Posterior cingulate gyrus (tissue), 11 donors: ENCODE measurements at regions of chr12 and their contacts with region 1.

Region 1: DNA sequence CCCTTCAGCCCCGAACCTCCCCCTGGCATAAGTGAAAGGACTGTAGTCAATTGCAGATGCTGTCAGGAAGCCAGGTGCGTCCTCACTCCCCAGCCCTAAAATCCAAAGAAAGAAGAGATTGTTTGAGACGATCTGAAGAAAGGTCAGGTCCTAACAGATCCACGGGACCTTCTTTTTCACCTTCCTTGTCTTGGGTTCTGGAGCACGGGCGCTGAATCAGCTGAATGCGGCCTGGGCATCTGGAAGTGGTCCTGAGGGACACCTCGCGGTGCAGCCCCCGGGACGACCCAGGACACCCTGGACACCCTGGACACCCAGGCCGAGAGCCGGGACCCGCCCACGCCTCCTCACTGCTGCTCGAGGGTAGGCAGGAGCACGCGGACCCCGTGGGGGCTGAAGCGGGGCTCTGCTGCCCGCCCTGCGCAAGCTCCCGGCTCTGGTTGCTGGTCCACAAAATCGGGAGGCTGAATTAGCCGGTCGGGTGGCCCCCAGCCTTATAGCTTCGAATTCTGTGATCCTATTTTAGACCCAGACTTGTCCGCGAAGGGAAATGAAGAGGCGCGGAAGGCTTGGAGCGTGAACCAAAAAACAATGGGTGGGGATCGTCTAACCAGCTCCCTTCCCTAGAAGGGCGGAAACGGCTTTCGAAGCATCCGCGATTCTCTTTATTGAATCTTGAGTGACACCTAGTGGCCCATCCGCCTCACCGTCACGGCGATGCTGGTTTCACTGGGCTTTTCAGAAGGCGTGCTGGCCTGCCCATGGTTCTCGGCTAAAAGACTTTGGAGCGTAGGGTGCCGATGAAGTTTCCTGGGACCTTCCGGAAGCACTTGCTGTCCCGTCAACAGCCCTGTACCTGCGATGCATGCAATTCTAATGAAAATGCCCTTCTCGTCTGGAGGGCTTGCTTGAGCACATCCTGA is 46.4 kb upstream of the PLXNC1 start:
- DNase-seq: peak; percentile 71 to 97 (median 84)

Region 2: DNA sequence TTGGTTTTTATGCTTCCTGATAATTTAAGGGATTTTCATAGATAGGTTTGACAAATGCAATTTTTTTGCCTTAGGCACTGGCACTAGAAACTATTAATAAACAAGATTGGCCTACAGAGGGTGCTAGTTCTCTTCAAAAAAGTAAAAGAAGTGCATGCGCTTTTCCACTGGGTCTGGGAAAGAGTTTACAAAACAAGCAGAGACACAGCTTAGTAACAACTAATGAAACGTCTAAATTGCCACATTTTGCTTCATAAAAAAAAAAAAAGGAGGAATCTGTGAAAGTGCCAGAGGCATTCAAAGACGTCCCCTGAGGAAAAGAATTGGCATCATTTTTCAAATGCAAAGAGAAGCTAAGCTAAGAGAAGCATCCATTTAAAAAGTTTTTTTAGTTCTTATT is 1114.6 kb before region 1 on chr12:
- intact Hi-C with region 1: loop called (anchors 10 kb)
- DNase-seq: no peak

Region 3: GRCh38 chr12:93502802-93503623 is 599.0 kb before region 1 on chr12:
- intact Hi-C with region 1: loop called (anchors 2 kb)
- DNase-seq: peak in 5 of 10 donors; percentile 20 to 52 (median 40)

Region 4: DNA sequence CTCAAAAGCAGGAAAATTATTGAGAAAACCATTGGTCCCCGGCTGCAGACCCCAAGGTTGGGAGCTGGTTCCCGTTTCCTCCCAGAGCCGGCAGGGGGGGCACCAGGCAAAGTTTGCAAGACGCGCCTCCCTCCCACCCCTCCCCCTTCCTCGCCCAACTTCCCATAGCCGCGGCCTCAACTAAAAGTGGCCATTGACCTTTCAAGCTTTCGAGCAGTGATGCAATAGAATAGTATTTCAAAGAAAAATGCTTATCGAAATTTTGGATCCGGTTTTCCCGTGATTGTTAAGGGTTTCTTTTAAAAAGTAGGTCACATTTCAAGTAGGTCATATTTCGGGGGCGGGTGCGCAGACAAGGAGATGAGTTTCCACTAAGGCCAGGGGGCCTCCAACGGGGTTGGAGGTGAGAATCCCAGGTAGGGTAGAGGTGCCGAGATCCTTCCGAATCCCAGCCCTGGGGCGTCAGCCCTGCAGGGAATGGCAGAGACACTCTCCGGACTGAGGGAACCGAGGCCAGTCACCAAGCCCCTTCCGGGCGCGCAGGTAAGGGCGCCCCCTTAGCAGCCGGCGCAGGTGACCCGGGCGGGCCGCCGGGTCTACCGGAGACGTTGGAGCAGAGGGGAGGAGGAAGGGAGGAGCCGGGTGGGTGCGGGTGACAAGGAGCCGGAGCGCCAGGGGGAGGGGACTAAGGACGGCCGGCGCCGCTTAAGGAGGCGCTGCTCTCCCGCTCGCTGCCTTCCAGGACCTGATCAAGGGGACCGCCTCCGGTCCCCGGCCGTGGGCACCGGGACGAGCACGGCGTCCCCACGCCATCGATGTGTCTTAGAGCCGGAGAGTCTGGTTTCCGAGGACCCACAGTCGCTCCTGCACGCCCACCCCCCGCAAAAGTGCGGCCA is 532.1 kb before region 1 on chr12:
- intact Hi-C with region 1: loop called (anchors 1 kb)
- DNase-seq: peak; percentile 68 to 95 (median 78)

Region 5: DNA sequence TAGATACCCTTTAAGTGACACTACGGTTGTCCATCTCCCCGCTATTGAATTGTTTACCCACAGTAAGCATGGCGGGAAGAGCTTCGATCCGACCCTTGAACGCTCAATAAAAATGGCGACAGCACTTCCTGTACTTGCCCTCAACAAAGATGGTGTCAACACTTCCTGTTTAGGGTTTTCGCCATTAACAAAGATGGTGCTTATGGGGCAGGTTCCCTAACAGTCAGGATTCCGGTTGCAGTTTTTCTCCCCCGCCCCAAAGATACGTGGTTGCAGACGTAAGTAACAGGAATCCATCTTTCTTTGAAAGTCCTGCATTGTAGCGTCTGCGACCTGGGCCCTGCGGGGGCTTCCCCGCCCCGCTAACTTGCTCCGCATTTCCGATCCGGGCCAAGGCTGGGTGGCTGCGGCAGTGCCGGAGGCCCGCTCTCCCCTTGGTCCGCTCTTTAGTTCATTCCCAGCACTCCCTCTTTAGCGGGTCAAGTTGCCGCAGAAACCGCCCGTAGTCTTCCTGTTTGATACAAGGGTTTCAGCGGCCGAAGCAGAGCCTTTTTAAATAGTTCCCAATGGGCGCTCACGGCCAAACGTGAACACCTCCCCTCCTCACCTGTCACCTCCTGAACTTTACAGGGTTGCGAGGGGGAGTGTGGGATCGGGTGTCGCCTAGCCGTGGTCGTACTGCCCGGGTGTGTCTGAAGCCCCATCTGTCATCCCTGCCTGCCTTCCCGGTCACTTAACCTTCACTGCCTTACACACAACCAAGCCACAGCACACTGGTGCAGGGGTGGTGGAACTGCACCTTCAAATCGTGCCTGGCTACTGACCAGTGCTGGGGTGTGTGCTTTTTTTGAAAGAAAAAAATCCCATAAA is 424.6 kb before region 1 on chr12 and contains the start of gene CRADD:
- intact Hi-C with region 1: loop called (anchors 5 kb)
- DNase-seq: peak; percentile 54 to 95 (median 70)

Region 6: DNA sequence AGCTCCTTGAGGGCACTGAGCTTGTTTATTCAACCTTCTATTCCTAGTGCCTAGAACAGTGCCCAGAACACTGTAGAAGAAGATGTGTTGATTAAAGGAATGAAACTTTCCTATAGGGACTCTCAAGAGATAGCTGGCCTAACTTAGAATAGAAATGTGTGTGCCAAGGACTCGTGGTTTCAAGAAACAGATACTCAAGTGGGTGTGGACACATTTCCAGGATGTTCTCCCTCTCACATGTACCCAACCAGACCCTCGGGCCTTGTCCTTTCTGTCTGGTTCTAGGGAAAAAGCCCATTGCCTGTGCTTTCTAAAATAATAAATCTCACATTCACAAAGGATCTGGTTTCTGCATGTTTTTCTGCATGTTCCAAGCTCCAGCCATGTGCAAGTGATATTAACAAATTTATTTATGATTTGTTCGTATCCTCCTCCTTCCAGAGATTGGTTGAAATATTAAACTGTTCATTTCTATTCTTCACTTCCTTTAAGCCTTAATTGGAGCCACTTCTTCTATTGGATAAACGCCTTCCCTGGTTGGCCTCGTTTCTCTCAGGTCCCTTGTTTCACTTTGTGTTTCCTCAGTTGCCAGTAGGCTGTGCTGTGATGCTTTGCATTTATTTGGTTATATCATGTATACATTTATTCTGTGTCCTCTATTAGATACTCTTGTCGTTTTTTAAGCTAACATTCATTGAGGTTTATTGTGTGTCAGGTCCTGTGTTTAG is 335.0 kb before region 1 on chr12:
- intact Hi-C with region 1: loop called (anchors 1 kb)
- DNase-seq: peak in 3 of 10 donors; percentile 20 to 40 (median 30)

Region 7: DNA sequence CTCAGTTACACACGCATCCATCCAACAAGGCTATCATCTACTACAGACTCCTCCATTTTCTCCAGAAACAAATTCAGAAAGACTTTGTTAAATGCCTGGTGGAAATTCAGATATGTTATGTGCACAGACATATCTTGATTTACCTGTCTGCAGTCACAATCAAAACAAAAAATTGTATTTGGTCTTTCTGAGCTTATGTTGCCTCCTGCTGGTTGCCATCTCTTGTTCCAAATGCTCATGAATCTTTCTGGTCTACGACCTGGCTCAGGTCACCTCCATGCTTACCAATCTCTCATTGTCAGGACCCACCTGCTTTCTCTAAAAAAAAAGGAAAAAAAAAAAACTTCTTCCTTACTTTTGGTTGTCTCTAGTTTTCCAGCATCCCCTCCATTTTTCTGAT is 122.8 kb before region 1 on chr12:
- intact Hi-C with region 1: loop called (anchors 10 kb)
- DNase-seq: no peak

Region 8: DNA sequence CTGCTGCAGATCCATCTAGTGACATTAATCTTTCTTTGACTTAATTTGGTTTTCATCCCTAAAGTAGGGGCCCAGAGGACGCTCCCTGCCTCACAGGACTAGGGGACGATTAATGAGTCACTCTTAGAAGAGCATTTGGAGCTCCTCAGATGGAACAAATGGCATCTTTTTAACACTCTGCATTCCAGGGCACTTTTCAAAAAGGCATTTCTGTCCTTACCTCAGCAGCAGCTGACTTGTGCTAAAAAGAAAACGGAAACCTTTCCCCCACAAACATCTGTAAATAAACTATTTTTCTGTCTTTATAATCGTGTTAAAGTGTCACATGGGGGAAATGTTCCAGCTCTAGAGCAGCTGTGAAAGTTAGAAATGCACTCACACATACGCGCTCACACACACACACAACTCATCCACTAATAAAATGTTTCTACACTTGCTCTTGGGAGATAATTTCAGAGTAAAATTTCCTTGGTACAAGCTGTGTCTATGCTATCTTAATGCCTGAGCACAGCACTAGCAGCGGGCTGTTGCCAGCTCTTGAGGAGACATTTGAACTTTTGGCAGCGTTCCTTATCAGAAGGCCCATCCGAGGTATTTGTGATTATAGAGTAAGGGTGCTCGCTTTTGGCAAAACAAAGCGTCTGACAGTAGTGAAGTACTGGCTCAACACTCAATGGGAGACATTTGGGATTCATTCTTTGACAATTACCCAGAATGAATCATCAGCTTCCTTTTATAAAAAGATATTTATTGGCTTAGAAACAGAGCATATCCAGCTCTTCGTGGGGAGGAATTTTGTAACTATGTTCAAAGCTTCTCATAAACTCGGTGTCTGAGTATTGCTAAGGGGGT is 187.7 kb after region 1 on chr12:
- intact Hi-C with region 1: no loop called
- DNase-seq: no peak